ENCODE measurements at regions of chr7 and their contacts with region 1.

Region 1: GRCh38 chr7:97027427-97028234 is 3.0 kb upstream of the DLX5 start:
- DNase-seq: peak; percentile 76
- H3K4me3 ChIP-seq: peak overlapping the region in 2 of 3 experiments; percentile 11 to 12
- H3K27ac ChIP-seq: no peak overlapping the region
- H3K4me1 ChIP-seq: peaks cover 4% of the 10 kb centered on the region
- H3K27me3 ChIP-seq: peaks cover 51 to 64% of the 10 kb centered on the region in 2 experiments
- CTCF ChIP-seq: peak; percentile 85 to 86
- POLR2A ChIP-seq: no peak

Region 2: GRCh38 chr7:95794917-95795515 is 1232.6 kb before region 1 on chr7:
- CTCF ChIA-PET with region 1: interaction called, 14 read pairs
- POLR2A ChIA-PET with region 1: no interaction called
- dilution Hi-C with region 1: no loop called
- intact Hi-C with region 1: no loop called
- DNase-seq: peak; percentile 18
- H3K4me3 ChIP-seq: no peak overlapping the region
- H3K27ac ChIP-seq: no peak overlapping the region
- H3K4me1 ChIP-seq: peaks cover 12% of the 10 kb centered on the region
- H3K27me3 ChIP-seq: no peaks in the 10 kb centered on the region
- CTCF ChIP-seq: peak; percentile 38 to 46
- POLR2A ChIP-seq: no peak

Region 3: DNA sequence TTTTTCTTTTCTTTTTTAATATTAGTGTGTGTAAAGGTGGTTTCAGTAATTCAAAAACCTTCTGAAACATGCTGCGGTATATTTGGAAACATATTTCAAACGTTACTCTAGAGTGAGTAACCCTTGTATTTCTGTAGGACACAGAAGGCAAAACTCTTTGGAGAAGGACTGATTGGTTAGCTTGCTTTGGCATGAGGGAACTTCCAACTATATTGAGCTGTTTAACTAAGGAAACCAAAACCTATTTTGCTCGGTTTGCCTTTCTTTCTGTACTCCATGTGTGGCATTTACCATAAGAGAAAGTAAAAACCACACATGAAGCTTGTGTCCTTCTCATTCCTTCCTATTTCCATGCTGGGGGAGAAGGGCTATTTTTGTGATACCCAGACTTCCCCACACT is 1105.4 kb before region 1 on chr7:
- CTCF ChIA-PET with region 1: interaction called, 211 read pairs
- POLR2A ChIA-PET with region 1: no interaction called
- dilution Hi-C with region 1: no loop called
- intact Hi-C with region 1: no loop called
- DNase-seq: no peak
- H3K4me3 ChIP-seq: no peak overlapping the region
- H3K27ac ChIP-seq: no peak overlapping the region
- H3K4me1 ChIP-seq: peaks cover 8% of the 10 kb centered on the region
- H3K27me3 ChIP-seq: peaks cover 37 to 56% of the 10 kb centered on the region in 2 experiments
- CTCF ChIP-seq: no peak
- POLR2A ChIP-seq: no peak

Region 4: GRCh38 chr7:96224685-96225084 is 802.9 kb before region 1 on chr7:
- CTCF ChIA-PET with region 1: interaction called, 19 read pairs
- POLR2A ChIA-PET with region 1: no interaction called
- dilution Hi-C with region 1: no loop called
- intact Hi-C with region 1: loop called (anchors 1 kb)
- DNase-seq: peak; percentile 31
- H3K4me3 ChIP-seq: no peak overlapping the region
- H3K27ac ChIP-seq: no peak overlapping the region
- H3K4me1 ChIP-seq: no peaks in the 10 kb centered on the region
- H3K27me3 ChIP-seq: no peaks in the 10 kb centered on the region
- CTCF ChIP-seq: peak in 1 of 2 donors; percentile 36
- POLR2A ChIP-seq: no peak

Region 5: DNA sequence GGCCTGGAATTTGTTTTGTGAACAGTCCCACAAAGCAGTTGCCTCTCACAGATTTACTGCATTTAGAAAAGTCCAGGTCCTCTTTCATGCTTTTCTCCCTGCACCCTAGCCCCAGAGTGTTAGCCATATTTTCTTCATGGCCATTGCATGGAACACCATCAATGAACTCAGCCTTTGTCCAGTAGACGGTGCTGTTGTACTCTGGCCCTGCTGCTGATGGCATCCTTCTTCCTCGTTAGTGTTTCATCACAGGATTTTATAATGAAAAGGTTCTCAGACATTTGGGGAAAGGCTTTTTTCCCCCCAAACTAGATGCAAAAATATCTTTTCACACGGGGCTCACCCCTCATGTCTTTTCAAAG is 612.7 kb before region 1 on chr7:
- CTCF ChIA-PET with region 1: interaction called, 4 read pairs
- POLR2A ChIA-PET with region 1: no interaction called
- dilution Hi-C with region 1: no loop called
- intact Hi-C with region 1: loop called (anchors 1 kb)
- DNase-seq: peak; percentile 10
- H3K4me3 ChIP-seq: no peak overlapping the region
- H3K27ac ChIP-seq: no peak overlapping the region
- H3K4me1 ChIP-seq: peaks cover 6% of the 10 kb centered on the region
- H3K27me3 ChIP-seq: no peaks in the 10 kb centered on the region
- CTCF ChIP-seq: peak; percentile 40 to 41
- POLR2A ChIP-seq: no peak

Region 6: DNA sequence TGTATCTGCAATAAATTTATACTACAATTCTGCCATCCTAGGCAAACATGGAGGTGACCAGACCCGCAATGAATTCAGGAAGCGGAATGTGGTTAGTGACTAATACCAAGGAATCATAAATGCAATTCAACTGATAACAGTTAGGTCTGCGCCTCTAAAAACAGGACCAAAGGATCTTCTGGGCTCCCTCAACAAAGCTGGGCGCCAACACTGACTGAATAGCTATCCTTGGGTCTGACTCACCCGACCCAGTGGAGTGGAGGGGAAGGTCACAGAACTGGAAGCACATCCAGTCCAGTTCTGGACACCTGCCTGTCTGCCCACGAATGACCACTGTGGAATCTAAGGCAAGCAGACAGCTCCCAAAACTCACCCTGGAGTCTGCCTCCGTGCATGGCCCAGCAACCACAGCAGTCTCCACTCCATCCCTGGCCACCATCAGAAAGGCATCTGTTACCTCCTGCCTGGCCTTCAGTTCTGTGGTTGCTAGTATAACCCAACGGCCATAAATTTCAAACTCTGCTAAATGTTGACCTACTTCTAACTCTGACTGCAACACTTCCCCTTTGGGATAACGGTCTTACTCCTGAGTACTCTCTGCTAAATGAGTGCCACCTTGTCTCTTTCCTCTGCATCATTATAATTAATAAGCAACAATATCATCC is 65.3 kb before region 1 on chr7:
- CTCF ChIA-PET with region 1: no interaction called
- POLR2A ChIA-PET with region 1: no interaction called
- dilution Hi-C with region 1: no loop called
- intact Hi-C with region 1: no loop called
- DNase-seq: no peak
- H3K4me3 ChIP-seq: no peak overlapping the region
- H3K27ac ChIP-seq: no peak overlapping the region
- H3K4me1 ChIP-seq: no peaks in the 10 kb centered on the region
- H3K27me3 ChIP-seq: no peaks in the 10 kb centered on the region
- CTCF ChIP-seq: no peak
- POLR2A ChIP-seq: no peak

Region 7: DNA sequence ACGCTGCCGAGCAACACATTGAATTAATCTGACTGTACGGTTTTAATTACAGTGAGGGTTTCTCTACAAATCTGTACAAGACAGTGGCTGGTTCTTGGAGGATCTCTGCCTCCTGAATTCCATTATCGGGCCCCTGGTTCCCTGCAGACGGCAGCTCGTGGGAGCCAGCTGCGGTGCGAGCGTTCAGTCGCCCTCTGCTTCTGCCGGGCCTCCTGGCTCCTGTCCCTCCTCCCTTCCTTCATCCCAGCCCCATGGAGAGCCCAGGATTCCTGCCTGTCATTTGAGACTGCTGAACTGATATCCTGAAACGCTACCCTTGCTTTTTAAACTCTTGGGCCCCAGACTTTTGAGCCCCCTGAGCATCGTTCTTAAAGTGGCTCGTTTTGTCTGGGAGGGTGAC is 28.9 kb before region 1 on chr7:
- CTCF ChIA-PET with region 1: interaction called, 13 read pairs
- POLR2A ChIA-PET with region 1: no interaction called
- dilution Hi-C with region 1: no loop called
- intact Hi-C with region 1: no loop called
- DNase-seq: no peak
- H3K4me3 ChIP-seq: no peak overlapping the region
- H3K27ac ChIP-seq: no peak overlapping the region
- H3K4me1 ChIP-seq: no peaks in the 10 kb centered on the region
- H3K27me3 ChIP-seq: peaks cover 92 to 97% of the 10 kb centered on the region in 2 experiments
- CTCF ChIP-seq: no peak
- POLR2A ChIP-seq: no peak

Region 8: GRCh38 chr7:97043281-97043680 is 15.7 kb after region 1 on chr7:
- CTCF ChIA-PET with region 1: interaction called, 10 read pairs
- POLR2A ChIA-PET with region 1: no interaction called
- dilution Hi-C with region 1: no loop called
- intact Hi-C with region 1: no loop called
- DNase-seq: no peak
- H3K4me3 ChIP-seq: no peak overlapping the region
- H3K27ac ChIP-seq: no peak overlapping the region
- H3K4me1 ChIP-seq: no peaks in the 10 kb centered on the region
- H3K27me3 ChIP-seq: peaks cover 0 to 2% of the 10 kb centered on the region in 2 experiments
- CTCF ChIP-seq: no peak
- POLR2A ChIP-seq: no peak

Measured in endothelial cell of umbilical vein (primary cell).